Activated CD8-positive, alpha-beta T cell treated with anti-CD3 and anti-CD28 coated beads, Interleukin-2, amount 10 ng/mL, durations not matched to agents 7 days and 5 days (primary cell): ENCODE measurements at regions of chr9 and their contacts with region 1.

Region 1: DNA sequence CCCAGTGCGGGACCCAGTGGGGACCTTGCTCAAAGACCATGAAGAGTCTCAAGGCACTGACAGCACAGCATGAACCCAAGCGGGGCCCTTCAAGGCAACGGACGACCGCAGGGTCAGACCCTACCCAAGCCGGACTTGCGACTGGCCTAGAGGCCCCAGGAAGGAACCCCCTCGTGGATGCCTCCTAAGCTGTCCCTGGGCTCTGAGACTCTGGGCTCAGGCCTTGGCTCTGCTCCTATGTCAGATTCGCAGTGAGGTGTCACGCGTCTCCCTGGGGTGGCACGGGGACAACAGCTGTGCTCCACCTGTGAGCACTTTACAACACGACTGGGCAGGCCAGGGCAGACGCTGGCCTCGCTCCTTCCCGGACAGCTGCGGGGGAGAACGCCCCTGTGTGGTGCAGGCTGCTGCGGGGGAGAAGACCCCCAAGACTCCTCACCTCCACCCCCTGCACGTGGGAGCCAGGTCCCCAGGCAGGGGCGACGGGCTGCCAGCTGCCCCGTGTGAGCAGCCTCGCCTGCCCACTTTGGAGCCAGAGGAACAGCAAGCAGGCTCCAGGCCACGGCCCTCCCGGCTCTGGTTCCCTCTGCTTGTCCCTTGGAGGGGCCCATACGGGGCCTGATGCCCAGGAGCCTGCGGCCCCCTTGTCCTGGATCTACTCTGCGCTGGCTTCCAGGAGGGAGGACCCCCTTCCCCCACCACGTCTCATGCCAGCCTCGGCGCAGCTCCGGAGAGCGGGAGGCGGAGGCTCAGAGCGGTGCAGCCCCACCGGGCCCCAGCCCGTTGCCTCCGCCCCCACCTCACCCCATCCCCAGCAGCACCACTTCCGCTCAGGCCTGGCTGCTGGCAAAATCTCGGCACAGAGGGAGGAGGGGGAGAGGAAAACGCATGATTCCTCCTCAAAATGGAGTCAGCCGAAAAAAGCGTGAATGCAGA is 36.0 kb downstream of the SARDH start:
- DNase-seq: peak; percentile 76
- ATAC-seq: peak; percentile 81
- H3K4me3 Mint-ChIP-seq: peak overlapping the region; percentile 72
- H3K27ac Mint-ChIP-seq: peak overlapping the region; percentile 92
- H3K4me1 Mint-ChIP-seq: peaks cover 46% of the 10 kb centered on the region
- H3K27me3 Mint-ChIP-seq: peaks cover 5% of the 10 kb centered on the region

Region 2: DNA sequence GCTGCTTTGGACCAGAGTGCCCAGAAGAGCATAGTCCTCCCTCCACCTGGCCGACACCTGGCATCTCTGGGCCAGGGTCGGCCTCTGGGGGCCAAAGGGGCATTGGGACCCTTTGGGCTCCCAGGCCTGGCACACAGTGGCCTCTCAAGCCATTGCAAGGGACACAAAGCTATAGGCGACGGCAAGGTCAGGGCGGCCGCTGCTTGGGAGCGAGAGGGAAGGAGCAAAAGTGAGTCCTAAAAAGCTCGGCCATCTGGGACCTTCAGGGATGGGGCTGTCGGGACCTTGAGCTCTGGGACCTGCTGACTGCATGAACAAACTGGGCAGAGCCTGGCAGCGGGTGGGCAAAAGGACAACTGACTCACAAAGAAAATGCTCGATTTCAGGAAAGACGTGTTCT is 52.1 kb before region 1 on chr9:
- CTCF ChIA-PET with region 1: no interaction called
- POLR2A ChIA-PET with region 1: no interaction called
- DNase-seq: no peak
- ATAC-seq: no peak
- H3K4me3 Mint-ChIP-seq: no peak overlapping the region
- H3K27ac Mint-ChIP-seq: no peak overlapping the region
- H3K4me1 Mint-ChIP-seq: peaks cover 10% of the 10 kb centered on the region
- H3K27me3 Mint-ChIP-seq: peaks cover 9% of the 10 kb centered on the region

Region 3: DNA sequence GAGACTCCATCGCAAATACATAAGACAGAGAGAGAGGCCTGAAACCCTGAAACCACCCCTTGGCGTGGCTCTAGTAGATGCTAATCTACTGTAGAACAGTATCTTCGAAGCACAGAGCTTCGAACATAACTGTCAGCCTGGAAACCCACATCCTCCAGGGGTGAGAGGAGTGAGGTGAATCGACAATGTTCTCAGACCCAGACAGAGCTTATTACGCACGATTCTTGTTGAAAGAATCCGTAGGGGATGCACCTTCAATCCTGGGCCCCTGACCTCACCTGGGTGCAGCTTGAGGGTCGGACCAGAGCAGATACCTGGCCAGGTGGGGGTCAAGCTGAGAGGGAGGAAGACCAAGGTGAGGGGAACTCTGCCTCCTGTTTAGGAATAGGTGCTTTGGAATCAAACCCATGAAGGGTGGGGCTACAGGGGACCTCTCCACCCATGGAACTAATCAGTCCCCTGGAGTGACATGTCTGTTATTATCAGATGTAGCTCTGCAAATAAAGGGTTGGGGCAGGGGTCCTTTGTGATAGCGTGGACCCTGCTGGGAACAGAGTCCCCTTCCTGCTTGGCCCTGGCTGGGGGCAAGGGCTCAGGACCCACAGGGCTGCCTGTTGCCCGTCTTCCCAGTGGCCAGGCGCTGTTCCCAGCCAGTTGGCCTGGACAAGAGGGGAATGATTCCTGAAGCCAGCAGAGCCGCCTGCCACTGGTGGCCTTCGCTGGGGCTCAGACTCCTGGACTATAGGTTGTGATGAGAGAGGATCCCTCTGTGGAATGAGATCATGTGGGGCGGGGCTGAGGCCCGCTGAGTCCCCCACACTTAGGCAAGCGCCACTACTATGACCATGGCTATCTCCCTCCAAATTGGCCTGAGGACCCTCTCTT is 24.8 kb before region 1 on chr9:
- CTCF ChIA-PET with region 1: interaction called, 6 read pairs
- POLR2A ChIA-PET with region 1: interaction called, 71 read pairs
- DNase-seq: peak; percentile 86
- ATAC-seq: peak; percentile 99
- H3K4me3 Mint-ChIP-seq: peak overlapping the region; percentile 12
- H3K27ac Mint-ChIP-seq: peak overlapping the region; percentile 96
- H3K4me1 Mint-ChIP-seq: peaks cover 44% of the 10 kb centered on the region
- H3K27me3 Mint-ChIP-seq: no peaks in the 10 kb centered on the region

Region 4: GRCh38 chr9:133683586-133684120 is 18.5 kb before region 1 on chr9:
- CTCF ChIA-PET with region 1: interaction called, 28 read pairs
- POLR2A ChIA-PET with region 1: interaction called, 71 read pairs
- DNase-seq: peak; percentile 83
- ATAC-seq: peak; percentile 86
- H3K4me3 Mint-ChIP-seq: peak overlapping the region; percentile 77
- H3K27ac Mint-ChIP-seq: peak overlapping the region; percentile 99
- H3K4me1 Mint-ChIP-seq: peaks cover 48% of the 10 kb centered on the region
- H3K27me3 Mint-ChIP-seq: no peaks in the 10 kb centered on the region

Region 5: GRCh38 chr9:133716564-133717112 is 14.5 kb after region 1 on chr9:
- CTCF ChIA-PET with region 1: no interaction called
- POLR2A ChIA-PET with region 1: no interaction called
- DNase-seq: no peak
- ATAC-seq: no peak
- H3K4me3 Mint-ChIP-seq: no peak overlapping the region
- H3K27ac Mint-ChIP-seq: no peak overlapping the region
- H3K4me1 Mint-ChIP-seq: peaks cover 3% of the 10 kb centered on the region
- H3K27me3 Mint-ChIP-seq: peaks cover 4% of the 10 kb centered on the region